ENCODE measurements at regions of chr14 and their contacts with region 1.

Region 1: GRCh38 chr14:99393047-99393655 is 87.5 kb downstream of the SETD3 start:
- DNase-seq: no peak
- H3K4me3 ChIP-seq: no peak overlapping the region
- CTCF ChIP-seq: peak; percentile 82

Region 2: DNA sequence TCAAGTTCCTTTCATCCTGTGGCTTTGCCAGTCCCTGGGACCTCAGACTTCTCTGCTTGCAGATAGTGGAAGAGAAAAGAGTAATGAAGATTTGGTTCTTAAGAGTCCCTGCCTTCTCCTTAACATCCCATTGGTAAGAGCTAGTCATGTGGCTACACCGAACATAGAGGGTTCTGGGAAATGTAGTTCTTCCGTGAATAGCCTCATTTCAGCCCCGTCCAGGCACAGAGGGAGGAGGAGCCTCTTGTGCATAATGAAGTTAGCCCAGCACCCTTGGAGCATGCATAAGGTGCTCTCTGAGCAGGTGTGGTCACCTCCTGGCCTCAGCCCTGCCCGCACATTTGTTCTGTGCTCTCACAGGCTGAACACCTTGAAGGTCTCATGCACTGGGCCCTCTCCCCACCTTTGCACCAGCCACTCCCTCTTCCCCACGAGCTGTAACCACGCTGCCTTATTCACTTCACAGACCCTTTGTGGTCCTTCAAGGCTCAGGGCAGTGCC is 255.1 kb before region 1 on chr14:
- CTCF ChIA-PET with region 1: no interaction called
- POLR2A ChIA-PET with region 1: no interaction called
- DNase-seq: no peak
- H3K4me3 ChIP-seq: no peak overlapping the region
- CTCF ChIP-seq: no peak

Region 3: DNA sequence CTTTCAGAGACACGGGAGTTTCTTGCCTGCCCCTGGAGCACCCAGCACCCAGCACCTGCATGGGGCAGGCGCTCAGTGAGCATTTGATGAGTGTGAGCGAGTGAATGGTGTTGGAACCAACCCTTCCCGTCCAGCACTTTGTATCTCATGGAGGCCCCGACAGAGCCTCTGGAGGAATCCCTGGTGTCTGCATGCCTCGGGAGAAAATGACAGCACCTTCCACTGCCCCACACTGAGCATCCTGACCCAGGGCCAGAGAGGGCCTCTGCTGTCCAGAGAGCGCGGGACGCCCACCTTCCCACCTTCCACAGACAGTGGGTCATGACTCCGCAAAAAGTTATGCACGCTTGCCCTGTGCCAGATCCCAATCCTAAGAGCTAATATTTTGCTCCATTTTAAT is 18.2 kb before region 1 on chr14:
- CTCF ChIA-PET with region 1: interaction called, 56 read pairs
- POLR2A ChIA-PET with region 1: no interaction called
- DNase-seq: no peak
- H3K4me3 ChIP-seq: no peak overlapping the region
- CTCF ChIP-seq: no peak

Region 4: GRCh38 chr14:99382781-99383451 is 10.2 kb before region 1 on chr14:
- CTCF ChIA-PET with region 1: interaction called, 56 read pairs
- POLR2A ChIA-PET with region 1: no interaction called
- DNase-seq: no peak
- H3K4me3 ChIP-seq: no peak overlapping the region
- CTCF ChIP-seq: no peak

Region 5: DNA sequence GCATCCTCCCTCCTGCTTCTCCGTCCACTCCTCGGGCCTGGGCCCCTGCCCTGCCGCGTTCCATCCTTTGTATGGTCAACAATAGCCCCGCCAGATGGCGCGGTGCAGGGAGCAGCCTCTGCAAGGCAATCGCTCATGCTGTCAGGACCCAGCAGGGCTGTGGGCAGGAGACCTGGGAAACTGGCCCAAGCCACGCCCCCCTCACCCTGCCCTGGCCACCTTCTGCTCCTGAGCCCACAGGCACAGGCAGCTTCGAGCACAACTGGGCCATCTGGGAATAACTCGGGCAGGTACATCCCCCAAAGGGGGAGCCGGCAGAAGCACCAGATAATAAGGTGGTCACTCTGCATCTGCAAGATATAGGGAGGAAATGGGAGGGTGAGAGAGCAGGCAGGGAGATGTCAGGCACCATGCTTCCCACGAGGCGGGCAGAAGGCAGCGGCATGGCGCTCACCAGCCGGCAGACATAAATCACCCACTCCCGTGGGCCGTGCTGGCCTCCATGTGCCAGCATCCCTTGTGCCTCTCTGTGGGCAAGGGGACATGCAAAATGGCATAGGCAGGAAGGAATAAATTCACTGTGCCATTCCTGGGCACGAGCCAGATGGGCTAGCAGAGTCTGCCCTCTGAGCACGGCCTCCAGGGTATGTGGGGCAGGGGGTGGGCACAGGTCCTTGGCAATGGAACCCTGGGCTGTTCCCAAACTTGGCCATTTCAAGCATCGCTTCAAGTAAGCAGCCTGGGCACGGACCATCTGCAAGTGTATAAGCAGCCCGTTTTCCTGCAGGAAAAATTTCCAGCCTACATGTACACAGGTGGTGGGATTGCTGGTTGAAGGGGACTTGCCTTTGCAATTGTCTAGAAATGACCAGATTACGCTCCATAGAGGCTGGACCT is 170.3 kb after region 1 on chr14:
- CTCF ChIA-PET with region 1: no interaction called
- POLR2A ChIA-PET with region 1: no interaction called
- DNase-seq: no peak
- H3K4me3 ChIP-seq: no peak overlapping the region
- CTCF ChIP-seq: peak; percentile 61